ENCODE measurements at regions of chr3 and their contacts with region 1.

Region 1: GRCh38 chr3:44198284-44199269 is 43.1 kb upstream of the TOPAZ1 start:
- DNase-seq: no peak

Region 2: GRCh38 chr3:43540624-43541023 is 658.0 kb before region 1 on chr3:
- intact Hi-C with region 1: loop called (anchors 5 kb)
- DNase-seq: no peak

Region 3: DNA sequence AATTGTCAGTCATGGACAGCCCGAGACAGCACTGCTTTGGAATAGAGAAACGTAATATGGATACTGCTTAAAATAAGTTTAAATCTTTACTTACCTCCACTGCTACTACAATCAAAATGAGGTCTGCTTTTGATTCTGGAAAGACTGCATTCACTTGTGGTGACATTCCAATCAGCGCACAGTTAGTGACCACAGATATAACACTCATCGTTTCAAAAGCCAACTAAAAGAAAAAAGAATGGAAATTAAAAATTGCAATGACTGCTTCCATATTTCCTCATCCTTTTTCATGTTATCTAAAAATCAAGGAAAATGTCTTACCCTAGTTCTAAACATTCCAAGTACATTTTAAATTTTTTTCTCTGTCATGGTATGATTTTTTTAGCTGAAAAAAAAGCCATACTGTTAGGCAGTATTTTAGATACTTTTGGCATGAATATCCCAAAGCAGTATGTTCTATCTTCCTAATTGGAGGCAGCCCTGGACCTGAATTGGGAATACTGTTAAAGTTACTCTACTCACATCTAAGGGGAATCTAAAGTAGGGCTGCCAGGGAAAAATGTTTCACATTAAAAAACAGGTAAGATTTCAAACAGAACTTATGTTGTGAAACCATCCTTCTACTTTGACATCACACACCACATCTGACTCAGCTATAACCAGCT is 648.8 kb before region 1 on chr3:
- intact Hi-C with region 1: loop called (anchors 5 kb)
- DNase-seq: no peak

Region 4: GRCh38 chr3:44235604-44236484 is 37.3 kb after region 1 on chr3:
- intact Hi-C with region 1: no loop called
- DNase-seq: peak; percentile 87